ENCODE measurements at regions of chr7 and their contacts with region 1.

Region 1: GRCh38 chr7:44858161-44858560 is 10.3 kb upstream of the H2AZ2 start:
- DNase-seq: no peak
- H3K4me3 ChIP-seq: no peak overlapping the region
- H3K27ac ChIP-seq: no peak overlapping the region
- H3K4me1 ChIP-seq: no peaks in the 10 kb centered on the region
- H3K27me3 ChIP-seq: no peaks in the 10 kb centered on the region
- CTCF ChIP-seq: peak; percentile 53
- EP300 ChIP-seq: no peak
- RAD21 ChIP-seq: no peak

Region 2: DNA sequence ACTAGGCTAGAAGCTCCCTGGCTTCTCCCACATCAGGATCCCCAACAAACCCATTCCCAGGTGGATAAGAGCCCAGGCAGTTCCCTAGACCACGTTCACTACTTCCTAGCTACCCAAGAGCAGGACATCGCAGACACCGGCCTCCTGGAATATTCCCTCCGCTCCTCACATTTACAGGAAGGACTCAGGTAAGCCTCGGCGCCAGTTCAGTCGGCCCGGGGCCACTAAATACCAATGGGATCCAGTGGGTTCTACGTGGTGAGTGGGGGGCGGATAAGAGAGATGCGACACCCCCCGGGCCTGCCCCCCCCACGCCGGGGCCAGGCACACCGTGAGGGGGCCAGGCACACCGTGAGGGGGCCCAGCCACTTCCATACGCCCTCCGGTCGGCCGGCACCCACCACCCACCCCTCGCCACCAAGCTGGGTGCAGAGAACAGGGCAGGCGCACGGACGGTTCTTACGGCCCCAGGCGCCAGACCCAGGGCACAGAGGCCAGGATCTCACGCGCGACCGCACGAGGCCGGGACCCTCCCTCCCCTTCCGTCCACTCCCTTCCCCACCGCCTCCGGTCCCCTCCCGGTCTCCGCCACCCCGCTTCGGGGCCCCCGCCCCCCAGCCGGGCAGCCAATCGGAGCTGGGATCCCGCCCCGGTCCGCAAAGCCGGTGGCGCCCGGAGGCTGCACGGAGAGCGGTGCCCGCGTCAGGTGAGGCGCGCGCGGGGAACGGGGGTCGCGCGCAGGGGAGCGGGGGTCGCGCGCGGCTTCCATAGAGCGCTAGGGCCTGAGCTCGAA is 1099.9 kb before region 1 on chr7 and contains the start of gene BLVRA:
- CTCF ChIA-PET with region 1: no interaction called
- POLR2A ChIA-PET with region 1: no interaction called
- DNase-seq: peak; percentile 100
- H3K4me3 ChIP-seq: peak within 1 kb of the TSS; percentile 74 to 83
- H3K27ac ChIP-seq: peak within 1 kb of the TSS; percentile 66 to 75
- H3K4me1 ChIP-seq: peaks cover 4 to 14% of the 10 kb centered on the region in 2 experiments; a peak in 2 of 4 replicates
- H3K27me3 ChIP-seq: no peaks in the 10 kb centered on the region
- CTCF ChIP-seq: no peak
- EP300 ChIP-seq: no peak
- RAD21 ChIP-seq: no peak
- polyA plus RNA-seq, gene BLVRA: 111 and 123 TPM in 2 replicates

Region 3: GRCh38 chr7:44885394-44886317 is 27.5 kb after region 1 on chr7 and contains the start of gene PURB:
- CTCF ChIA-PET with region 1: interaction called, 38 read pairs
- POLR2A ChIA-PET with region 1: interaction called, 6 read pairs
- DNase-seq: peak; percentile 99
- H3K4me3 ChIP-seq: peak within 1 kb of the TSS; percentile 78 to 87
- H3K27ac ChIP-seq: peak within 1 kb of the TSS; percentile 90 to 97
- H3K4me1 ChIP-seq: peaks cover 23 to 41% of the 10 kb centered on the region in 2 experiments; a peak in 3 of 4 replicates
- H3K27me3 ChIP-seq: no peaks in the 10 kb centered on the region
- CTCF ChIP-seq: no peak
- EP300 ChIP-seq: peak in 1 of 2 experiments; percentile 75; a peak in 1 of 4 replicates
- RAD21 ChIP-seq: no peak
- polyA plus RNA-seq, gene PURB: 4.1 and 4.8 TPM in 2 replicates

Region 4: DNA sequence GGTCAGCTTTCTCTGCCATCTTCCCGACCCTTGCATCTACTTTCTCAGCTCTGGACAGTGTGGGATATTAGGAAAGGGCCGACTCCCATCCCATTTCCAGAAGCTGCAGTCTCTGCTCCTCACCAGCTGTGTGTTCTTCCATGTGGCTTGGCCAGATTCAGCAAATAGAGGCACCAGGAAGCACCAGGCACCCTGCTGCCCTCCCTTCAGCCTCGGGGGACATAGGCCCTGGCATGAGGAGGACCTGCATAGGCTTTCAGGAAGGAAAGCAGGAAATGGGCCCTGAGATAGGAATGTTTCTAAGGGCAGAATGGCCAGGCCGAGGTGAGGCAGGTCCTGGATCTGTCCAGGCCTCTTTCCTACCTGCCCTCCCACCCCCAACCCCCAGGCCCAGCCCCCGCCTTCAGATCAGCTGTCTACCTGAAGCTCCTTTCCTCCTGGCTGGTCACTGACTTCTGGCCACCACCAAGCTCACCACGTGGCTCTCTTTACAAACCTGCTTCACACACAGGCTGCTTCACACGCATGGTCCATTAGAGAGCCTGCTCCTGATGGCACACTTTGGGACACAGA is 54.7 kb after region 1 on chr7:
- CTCF ChIA-PET with region 1: interaction called, 135 read pairs
- POLR2A ChIA-PET with region 1: no interaction called
- DNase-seq: peak; percentile 58
- H3K4me3 ChIP-seq: no peak overlapping the region
- H3K27ac ChIP-seq: peak overlapping the region in 1 of 2 experiments; percentile 17; a peak in 1 of 4 replicates
- H3K4me1 ChIP-seq: peaks cover 0 to 16% of the 10 kb centered on the region in 2 experiments; a peak in 1 of 4 replicates
- H3K27me3 ChIP-seq: no peaks in the 10 kb centered on the region
- CTCF ChIP-seq: no peak
- EP300 ChIP-seq: no peak
- RAD21 ChIP-seq: no peak

Region 5: DNA sequence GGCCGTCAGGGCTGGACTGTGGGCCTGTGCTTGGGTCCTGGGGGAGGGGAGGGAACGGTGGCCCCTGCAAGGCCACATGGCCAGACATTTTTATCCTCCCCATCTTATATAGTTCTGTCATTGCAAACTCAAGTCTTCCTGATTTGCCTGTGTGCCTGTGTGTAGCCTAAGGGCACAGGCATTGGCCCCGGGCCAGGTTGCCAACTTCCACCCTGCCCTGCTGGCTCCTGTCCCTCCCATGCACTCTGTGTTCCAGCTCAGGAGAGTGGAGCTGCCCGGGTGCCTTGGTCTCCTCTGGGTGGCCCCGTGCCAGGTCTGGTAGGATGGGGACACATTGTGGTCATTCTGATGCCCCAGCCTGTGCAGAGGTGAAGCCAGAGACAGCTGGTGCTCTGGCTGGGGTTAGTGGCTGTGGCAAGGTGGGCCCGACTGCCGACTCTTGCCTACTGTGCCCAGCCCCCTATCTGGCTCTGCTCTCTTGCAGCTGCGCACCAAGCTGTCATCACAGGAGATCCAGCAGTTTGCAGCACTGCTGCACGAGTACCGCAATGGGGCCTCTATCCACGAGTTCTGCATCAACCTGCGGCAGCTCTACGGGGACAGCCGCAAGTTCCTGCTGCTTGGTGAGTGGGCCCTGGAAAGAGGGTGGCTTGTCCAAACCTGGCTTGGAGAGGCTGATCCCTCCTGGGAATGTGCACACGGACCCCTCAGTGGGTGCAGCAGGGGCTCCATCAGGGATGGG is 215.8 kb after region 1 on chr7:
- CTCF ChIA-PET with region 1: interaction called, 17 read pairs
- POLR2A ChIA-PET with region 1: no interaction called
- DNase-seq: peak; percentile 96
- H3K4me3 ChIP-seq: no peak overlapping the region
- H3K27ac ChIP-seq: peak overlapping the region in 1 of 2 experiments; percentile 91; a peak in 2 of 4 replicates
- H3K4me1 ChIP-seq: peaks cover 0 to 40% of the 10 kb centered on the region in 2 experiments; a peak in 1 of 4 replicates
- H3K27me3 ChIP-seq: no peaks in the 10 kb centered on the region
- CTCF ChIP-seq: no peak
- EP300 ChIP-seq: peak in 1 of 2 experiments; percentile 79; a peak in 2 of 4 replicates
- RAD21 ChIP-seq: peak; percentile 36

Region 6: DNA sequence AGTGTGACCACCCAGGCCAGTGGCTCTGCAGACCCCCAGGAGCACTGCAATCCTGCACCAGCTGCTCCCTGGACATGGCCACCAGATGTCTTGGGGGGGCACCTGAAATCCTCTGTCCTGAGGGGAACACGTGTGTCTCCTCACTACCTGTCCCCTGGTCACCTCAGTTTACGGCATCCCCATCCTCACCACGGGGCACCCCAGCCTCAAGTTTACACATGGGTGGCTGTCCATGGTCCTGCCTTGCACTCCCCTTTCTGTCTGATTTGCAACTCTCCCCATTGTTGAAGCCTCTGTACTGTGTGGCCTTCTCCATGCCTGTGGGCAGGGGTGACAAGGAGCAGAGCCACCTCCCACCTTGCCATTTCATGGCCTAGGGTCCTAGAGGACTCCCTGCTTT is 366.7 kb after region 1 on chr7:
- CTCF ChIA-PET with region 1: no interaction called
- POLR2A ChIA-PET with region 1: no interaction called
- DNase-seq: no peak
- H3K4me3 ChIP-seq: no peak overlapping the region
- H3K27ac ChIP-seq: no peak overlapping the region
- H3K4me1 ChIP-seq: peaks cover 0 to 27% of the 10 kb centered on the region in 2 experiments; a peak in 2 of 4 replicates
- H3K27me3 ChIP-seq: peaks cover 25% of the 10 kb centered on the region
- CTCF ChIP-seq: no peak
- EP300 ChIP-seq: no peak
- RAD21 ChIP-seq: no peak